Calu3 (cell line): ENCODE measurements at regions of chr3 and their contacts with region 1.

Region 1: GRCh38 chr3:175941356-175941755 is 1082.2 kb downstream of the NAALADL2 start:
- DNase-seq: peak; percentile 56
- H3K4me3 Mint-ChIP-seq: no peak overlapping the region
- H3K27ac Mint-ChIP-seq: no peak overlapping the region
- H3K4me1 Mint-ChIP-seq: peaks cover 9% of the 10 kb centered on the region
- H3K27me3 Mint-ChIP-seq: no peaks in the 10 kb centered on the region
- CTCF ChIP-seq: peak; percentile 84

Region 2: GRCh38 chr3:174397848-174398247 is 1543.5 kb before region 1 on chr3:
- CTCF ChIA-PET with region 1: no interaction called
- intact Hi-C with region 1: loop called (anchors 10 kb)
- DNase-seq: no peak
- H3K4me3 Mint-ChIP-seq: no peak overlapping the region
- H3K27ac Mint-ChIP-seq: no peak overlapping the region
- H3K4me1 Mint-ChIP-seq: no peaks in the 10 kb centered on the region
- H3K27me3 Mint-ChIP-seq: no peaks in the 10 kb centered on the region
- CTCF ChIP-seq: peak; percentile 64

Region 3: DNA sequence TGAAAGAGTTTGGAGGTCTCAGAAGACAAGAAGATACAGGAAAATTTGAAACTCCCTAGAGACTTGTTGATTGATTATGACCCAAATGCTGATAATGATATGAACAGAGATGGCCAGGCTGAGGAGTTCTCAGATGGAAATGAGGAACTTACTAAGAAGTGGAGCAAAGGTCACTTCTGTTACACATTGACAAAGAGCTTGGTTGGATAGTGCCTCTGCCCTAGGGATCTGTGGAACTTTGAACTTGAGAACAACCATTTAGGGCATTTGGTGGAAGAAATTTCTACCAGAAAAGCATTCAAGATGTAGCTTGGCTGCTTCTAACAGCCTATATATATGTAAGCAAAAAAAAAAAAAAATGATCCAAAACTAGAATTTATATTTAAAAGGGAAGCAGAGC is 1131.1 kb before region 1 on chr3:
- CTCF ChIA-PET with region 1: no interaction called
- intact Hi-C with region 1: no loop called
- DNase-seq: no peak
- H3K4me3 Mint-ChIP-seq: no peak overlapping the region
- H3K27ac Mint-ChIP-seq: no peak overlapping the region
- H3K4me1 Mint-ChIP-seq: peaks cover 17% of the 10 kb centered on the region
- H3K27me3 Mint-ChIP-seq: no peaks in the 10 kb centered on the region
- CTCF ChIP-seq: no peak

Region 4: DNA sequence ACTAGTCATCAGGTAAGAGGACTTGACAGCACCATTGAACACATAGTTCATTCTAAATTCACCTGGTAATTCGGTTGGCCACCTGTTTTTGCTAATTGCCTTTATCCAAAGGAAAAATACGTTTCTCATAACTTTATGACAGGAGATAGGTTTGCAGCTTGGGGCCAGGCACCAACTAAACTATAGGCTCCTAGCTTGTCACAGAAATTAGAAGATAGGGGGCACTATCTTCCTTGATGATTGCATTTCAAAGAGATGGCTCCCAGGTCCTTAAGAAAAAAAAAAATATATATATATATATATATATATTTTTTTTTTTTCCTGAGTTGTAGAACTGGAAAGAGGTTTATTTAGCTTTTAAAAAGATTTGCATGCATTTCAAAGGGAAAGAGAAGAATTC is 518.6 kb before region 1 on chr3:
- CTCF ChIA-PET with region 1: no interaction called
- intact Hi-C with region 1: loop called (anchors 2 kb)
- DNase-seq: no peak
- H3K4me3 Mint-ChIP-seq: no peak overlapping the region
- H3K27ac Mint-ChIP-seq: no peak overlapping the region
- H3K4me1 Mint-ChIP-seq: no peaks in the 10 kb centered on the region
- H3K27me3 Mint-ChIP-seq: no peaks in the 10 kb centered on the region
- CTCF ChIP-seq: no peak

Region 5: GRCh38 chr3:176321099-176321498 is 379.7 kb after region 1 on chr3:
- CTCF ChIA-PET with region 1: no interaction called
- intact Hi-C with region 1: no loop called
- DNase-seq: no peak
- H3K4me3 Mint-ChIP-seq: no peak overlapping the region
- H3K27ac Mint-ChIP-seq: no peak overlapping the region
- H3K4me1 Mint-ChIP-seq: no peaks in the 10 kb centered on the region
- H3K27me3 Mint-ChIP-seq: no peaks in the 10 kb centered on the region
- CTCF ChIP-seq: no peak